Lower leg skin (tissue), 4 donors: ENCODE measurements at regions of chr7 and their contacts with region 1.

Region 1: GRCh38 chr7:82729172-82730030 is 285.8 kb upstream of the CACNA2D1 start:
- DNase-seq: no peak
- H3K4me3 ChIP-seq: no peak overlapping the region
- CTCF ChIP-seq: no peak
- POLR2A ChIP-seq: no peak

Region 2: DNA sequence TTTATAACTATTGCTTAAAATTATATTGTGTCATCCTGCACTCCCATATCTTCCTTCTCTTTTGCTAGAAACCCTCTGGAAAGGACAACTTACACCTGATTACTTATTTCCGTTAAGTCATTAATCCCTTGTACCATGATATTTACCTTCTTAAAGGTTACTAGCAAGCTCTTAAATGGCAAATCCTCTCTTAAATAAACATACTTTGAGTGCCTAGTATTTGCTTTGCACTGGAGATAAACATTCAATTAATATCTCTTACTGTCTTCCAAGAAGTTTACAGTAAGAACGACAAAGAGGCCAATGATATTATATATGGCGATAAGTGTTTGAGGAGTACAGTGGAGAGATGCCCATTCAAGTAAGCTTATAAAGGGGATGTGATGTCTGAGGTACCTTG is 1237.8 kb before region 1 on chr7:
- intact Hi-C with region 1: loop called (anchors 5 kb)
- DNase-seq: no peak
- H3K4me3 ChIP-seq: no peak overlapping the region
- CTCF ChIP-seq: no peak
- POLR2A ChIP-seq: no peak